GM10248 (cell line): ENCODE measurements at regions of chr6 and their contacts with region 1.

Region 1: DNA sequence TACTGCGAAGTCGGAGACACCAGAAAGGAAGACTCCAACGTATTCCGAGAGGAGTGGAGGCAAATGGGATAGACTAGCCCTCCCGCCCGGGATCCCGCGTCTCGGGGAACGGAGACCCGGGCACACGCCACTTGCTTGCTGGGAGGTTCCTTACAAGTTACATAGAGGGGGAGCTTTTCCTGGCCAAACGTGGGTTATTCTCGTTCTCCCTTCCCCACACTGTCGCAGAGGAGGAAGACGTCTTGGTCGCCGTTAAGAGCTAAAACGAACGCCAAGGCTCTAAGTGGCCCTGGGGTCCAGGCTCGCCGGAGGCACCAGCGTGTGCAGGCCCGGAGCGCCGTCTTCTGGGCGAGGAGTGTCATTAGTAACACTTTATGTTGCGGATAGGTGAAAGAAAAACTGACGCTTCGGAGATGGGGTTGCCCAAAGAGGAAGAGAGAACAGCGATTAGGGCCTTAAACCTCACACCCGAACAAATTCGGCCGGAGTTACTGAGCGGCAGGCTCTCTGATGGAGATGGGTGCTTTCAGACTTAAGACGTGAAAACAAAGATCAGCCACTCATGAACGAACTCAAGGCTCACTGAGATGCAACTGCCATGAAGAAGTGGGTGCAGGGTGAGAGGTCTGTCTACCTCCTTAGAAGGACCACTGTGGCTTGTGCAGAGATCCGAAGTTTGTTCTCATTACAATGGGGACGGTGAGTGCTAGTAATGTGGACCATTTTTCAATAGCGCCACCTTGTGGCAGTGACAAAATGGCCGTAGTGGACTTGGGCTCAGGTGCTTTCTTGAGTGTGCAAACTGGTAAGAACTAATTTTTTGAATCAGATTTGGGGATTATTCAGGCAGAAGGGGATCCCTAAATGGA is 11.7 kb upstream of the ZNF311 start:
- DNase-seq: peak; percentile 73
- CTCF ChIP-seq: peak; percentile 89

Region 2: DNA sequence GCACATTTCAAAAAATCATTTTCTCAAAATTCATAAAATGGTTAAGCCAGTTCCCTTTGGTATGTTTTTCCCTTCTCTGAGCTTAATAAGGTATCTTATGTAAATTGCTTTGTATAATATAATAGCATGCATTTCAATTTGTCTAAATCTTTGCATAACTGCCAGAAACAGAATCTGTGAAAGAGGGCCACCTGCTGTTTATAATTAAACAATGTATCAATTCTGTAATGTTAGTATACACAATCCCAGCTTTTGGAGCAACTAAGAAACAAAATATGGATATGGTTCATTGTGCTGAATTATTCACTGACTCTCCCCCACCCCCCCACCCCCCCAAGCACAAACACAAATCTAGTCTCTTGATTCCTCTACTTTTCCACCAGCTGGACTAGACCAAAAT is 436.3 kb before region 1 on chr6:
- CTCF ChIA-PET with region 1: no interaction called
- POLR2A ChIA-PET with region 1: no interaction called
- DNase-seq: no peak
- CTCF ChIP-seq: no peak

Region 3: DNA sequence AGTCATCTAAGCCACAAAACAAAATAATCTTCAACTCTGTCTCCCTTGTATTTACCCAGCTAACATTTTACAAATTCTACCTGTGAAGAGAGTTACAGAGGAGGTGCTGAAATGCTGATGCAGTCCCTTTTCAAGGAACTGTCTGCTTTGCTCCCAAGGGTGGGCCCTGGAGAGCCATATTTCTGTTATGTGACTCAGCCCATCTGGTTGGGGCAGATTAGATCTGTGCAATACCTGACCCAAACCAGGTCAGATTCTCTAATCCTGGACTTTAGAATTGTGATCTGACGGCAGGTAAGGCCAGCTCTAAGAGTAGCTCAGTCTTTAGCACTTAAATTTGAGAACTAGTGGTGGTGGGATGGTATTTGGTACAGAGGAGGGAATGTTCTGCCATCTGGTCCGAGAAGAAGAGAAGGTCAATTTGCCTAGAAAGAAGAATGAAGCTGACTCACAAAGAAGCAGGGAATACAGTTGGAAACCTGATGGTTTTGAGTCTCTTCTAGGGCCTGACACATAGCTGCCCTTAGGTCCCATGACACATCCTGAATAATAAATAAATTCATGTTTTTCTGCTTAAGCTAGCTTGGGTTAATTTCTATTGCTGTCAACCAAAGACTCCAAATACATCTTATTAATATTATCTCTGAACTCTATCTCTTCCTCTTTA is 19.8 kb before region 1 on chr6:
- CTCF ChIA-PET with region 1: interaction called, 12 read pairs
- POLR2A ChIA-PET with region 1: no interaction called
- DNase-seq: no peak
- CTCF ChIP-seq: no peak

Region 4: DNA sequence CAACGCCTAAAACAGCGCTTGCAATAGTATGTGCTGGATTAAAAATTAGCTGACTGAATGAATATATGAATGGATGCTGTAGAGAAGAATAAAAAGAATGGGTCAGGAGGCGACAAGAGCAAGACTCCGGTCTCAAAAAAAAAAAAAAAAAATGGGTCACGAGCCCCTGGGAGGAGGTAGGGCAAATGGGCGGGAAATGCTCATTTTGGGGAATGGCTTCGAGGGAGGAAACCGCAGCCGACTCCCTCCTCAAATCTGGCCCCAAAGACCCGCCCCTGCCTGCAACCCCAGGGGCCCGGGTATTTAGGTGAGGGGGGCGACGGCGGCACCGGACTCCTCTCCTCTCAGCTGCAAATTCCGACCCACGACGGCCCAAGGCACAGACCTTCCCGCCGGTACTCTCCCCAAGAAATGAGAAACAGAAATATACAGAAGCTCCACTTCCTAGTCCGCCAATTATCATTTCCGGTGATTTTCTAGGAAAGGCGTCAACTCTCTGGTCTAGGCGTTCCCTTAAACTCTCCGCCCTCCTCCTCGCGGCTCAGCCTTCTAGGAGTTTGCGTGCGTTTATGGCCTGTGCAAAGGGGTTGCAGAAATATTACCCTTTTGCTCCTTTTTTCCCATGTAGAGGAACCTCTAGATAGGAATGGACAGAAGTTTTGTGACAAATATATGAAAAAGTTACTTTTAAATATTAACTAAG is 11.5 kb before region 1 on chr6 and contains the start of gene ZNF311:
- CTCF ChIA-PET with region 1: interaction called, 12 read pairs
- POLR2A ChIA-PET with region 1: no interaction called
- DNase-seq: no peak
- CTCF ChIP-seq: no peak